Panc1 (cell line): ENCODE measurements at regions of chr10 and their contacts with region 1.

Region 1: GRCh38 chr10:126670056-126670894 is at the start of gene C10orf90:
- DNase-seq: no peak
- ATAC-seq: no peak
- H3K4me3 ChIP-seq: no peak within 1 kb of the TSS
- H3K27ac ChIP-seq: no peak within 1 kb of the TSS
- H3K4me1 ChIP-seq: no peaks in the 10 kb centered on the region
- H3K27me3 ChIP-seq: peaks cover 8% of the 10 kb centered on the region
- CTCF ChIP-seq: no peak
- total RNA-seq, gene C10orf90: 0.67 TPM

Region 2: GRCh38 chr10:126595160-126595744 is 75.0 kb before region 1 on chr10:
- CTCF ChIA-PET with region 1: no interaction called
- POLR2A ChIA-PET with region 1: interaction called, 11 read pairs
- in situ Hi-C with region 1: no loop called
- intact Hi-C with region 1: no loop called
- DNase-seq: no peak
- ATAC-seq: no peak
- H3K4me3 ChIP-seq: no peak overlapping the region
- H3K27ac ChIP-seq: no peak overlapping the region
- H3K4me1 ChIP-seq: no peaks in the 10 kb centered on the region
- H3K27me3 ChIP-seq: no peaks in the 10 kb centered on the region
- CTCF ChIP-seq: no peak